HEK293 (cell line): ENCODE measurements at regions of chr16 and their contacts with region 1.

Region 1: DNA sequence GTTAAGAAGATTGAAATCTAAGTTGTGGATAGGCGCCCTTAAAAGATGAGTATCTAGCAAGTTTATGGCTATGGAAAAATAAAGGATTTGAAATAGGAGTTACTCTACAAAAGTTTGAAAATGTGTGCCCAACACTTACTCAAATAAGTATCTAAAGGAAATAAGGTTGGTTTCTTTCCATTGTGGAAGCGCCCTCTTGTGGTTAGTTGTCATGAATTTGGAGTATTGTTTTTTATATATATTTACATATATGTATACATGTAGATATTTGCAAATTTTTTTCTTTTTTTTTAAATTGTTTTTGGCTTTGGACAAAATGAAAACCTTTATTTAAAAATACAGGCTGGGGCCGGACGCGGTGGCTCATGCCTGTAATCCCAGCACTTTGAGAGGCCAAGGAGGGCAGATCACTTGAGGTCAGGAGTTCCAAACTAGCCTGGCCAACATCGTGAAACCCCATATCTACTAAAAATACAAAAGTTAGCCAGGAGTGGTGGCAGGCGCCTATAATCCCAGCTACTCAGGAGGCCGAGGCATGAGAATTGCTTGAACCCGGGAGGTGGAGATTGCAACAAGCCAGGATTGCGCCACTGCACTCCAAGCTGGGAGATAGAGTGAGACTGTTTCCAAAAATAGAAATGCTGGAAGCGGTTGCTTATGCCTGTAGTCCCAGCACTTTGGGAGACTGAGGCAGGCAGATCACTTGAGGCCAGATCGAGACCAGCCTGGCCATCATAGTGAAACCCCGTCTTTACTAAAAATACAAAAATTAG is 24.0 kb upstream of the VPS4A start:
- H3K4me3 ChIP-seq: no peak overlapping the region
- H3K27ac ChIP-seq: no peak overlapping the region
- H3K4me1 ChIP-seq: no peaks in the 10 kb centered on the region
- CTCF ChIP-seq: no peak

Region 2: GRCh38 chr16:69150146-69150865 is 136.8 kb before region 1 on chr16:
- CTCF ChIA-PET with region 1: interaction called, 104 read pairs
- POLR2A ChIA-PET with region 1: no interaction called
- H3K4me3 ChIP-seq: no peak overlapping the region
- H3K27ac ChIP-seq: no peak overlapping the region
- H3K4me1 ChIP-seq: no peaks in the 10 kb centered on the region
- CTCF ChIP-seq: peak; percentile 67; the same call in 1 of the 2 replicates

Region 3: GRCh38 chr16:69276148-69277115 is 10.7 kb before region 1 on chr16:
- CTCF ChIA-PET with region 1: interaction called, 11 read pairs
- POLR2A ChIA-PET with region 1: no interaction called
- H3K4me3 ChIP-seq: no peak overlapping the region
- H3K27ac ChIP-seq: no peak overlapping the region
- H3K4me1 ChIP-seq: no peaks in the 10 kb centered on the region
- CTCF ChIP-seq: no peak